Activated CD4-positive, alpha-beta T cell treated with anti-CD3 and anti-CD28 coated beads, Interleukin-2, amount 10 ng/mL, durations not matched to agents 24 days and 14 days (primary cell): ENCODE measurements at regions of chr1 and their contacts with region 1.

Region 1: GRCh38 chr1:35557292-35558063 is at the starts of genes KIAA0319L and NCDN:
- DNase-seq: peak; percentile 98
- H3K4me3 Mint-ChIP-seq: peak within 1 kb of the TSS; percentile 98
- H3K27ac Mint-ChIP-seq: peak within 1 kb of the TSS; percentile 98
- H3K4me1 Mint-ChIP-seq: peaks cover 47% of the 10 kb centered on the region
- H3K27me3 Mint-ChIP-seq: no peaks in the 10 kb centered on the region
- total RNA-seq, gene KIAA0319L: 35.2 and 35.3 TPM in 2 replicates
- total RNA-seq, gene NCDN: 33.5 and 34.0 TPM in 2 replicates

Region 2: GRCh38 chr1:34859446-34860200 is 697.9 kb before region 1 on chr1 and contains the start of gene SMIM12:
- intact Hi-C with region 1: loop called (anchors 10 kb)
- DNase-seq: peak; percentile 97
- H3K4me3 Mint-ChIP-seq: peak within 1 kb of the TSS; percentile 95
- H3K27ac Mint-ChIP-seq: peak within 1 kb of the TSS; percentile 99
- H3K4me1 Mint-ChIP-seq: peaks cover 43% of the 10 kb centered on the region
- H3K27me3 Mint-ChIP-seq: no peaks in the 10 kb centered on the region
- total RNA-seq, gene SMIM12: 63.2 TPM in 2 replicates

Region 3: GRCh38 chr1:34924759-34925555 is 632.5 kb before region 1 on chr1:
- intact Hi-C with region 1: no loop called
- DNase-seq: peak; percentile 86
- H3K4me3 Mint-ChIP-seq: no peak overlapping the region
- H3K27ac Mint-ChIP-seq: no peak overlapping the region
- H3K4me1 Mint-ChIP-seq: peaks cover 5% of the 10 kb centered on the region
- H3K27me3 Mint-ChIP-seq: peaks cover 56% of the 10 kb centered on the region

Region 4: DNA sequence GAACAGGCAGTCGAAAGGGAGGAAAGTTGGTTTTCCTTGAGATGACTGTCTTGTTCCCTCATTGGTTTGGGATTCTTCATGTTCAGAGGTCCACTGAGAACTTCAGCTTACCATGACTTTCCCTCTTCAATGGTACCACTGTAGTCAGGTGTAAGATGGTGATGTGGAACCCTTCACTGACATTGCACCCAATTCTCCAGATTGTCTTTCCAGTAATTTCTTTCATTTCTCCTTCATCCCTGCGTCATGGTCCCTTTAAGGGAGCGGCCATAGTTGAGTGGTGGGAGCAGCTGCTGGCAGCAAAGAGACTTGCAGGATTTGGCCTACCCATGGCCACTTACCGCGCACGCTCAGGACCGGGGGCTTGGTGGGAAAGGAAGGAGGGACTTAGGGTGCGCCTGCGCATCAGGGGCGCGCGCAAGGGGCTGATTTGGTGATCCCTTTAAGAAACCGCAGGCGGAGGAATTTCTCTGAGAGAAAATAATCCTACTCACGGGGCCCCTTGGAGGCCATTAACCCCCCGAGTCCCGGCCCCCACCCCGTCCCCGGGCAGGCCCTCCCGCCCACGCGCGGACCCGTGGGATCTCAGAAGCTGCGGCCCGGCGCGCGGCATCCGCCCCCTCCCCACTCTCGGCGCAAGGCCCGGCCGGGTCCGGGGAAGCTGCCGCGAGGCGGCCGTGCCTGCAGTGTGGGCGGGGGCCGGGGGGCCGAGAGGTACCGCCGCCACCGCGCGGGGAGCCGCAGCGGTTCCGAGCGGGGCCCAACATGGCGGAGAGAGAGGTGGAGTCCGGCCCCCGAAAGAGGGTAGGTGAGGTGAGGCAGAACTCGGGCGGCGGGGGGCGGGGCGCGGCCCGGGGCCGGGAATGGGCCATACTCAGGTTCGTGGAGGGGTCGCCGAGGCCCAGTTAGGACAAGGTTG is 288.9 kb before region 1 on chr1 and contains the start of gene ZMYM4:
- intact Hi-C with region 1: loop called (anchors 5 kb)
- DNase-seq: peak; percentile 97
- H3K4me3 Mint-ChIP-seq: peak within 1 kb of the TSS; percentile 95
- H3K27ac Mint-ChIP-seq: peak within 1 kb of the TSS; percentile 97
- H3K4me1 Mint-ChIP-seq: peaks cover 27% of the 10 kb centered on the region
- H3K27me3 Mint-ChIP-seq: peaks cover 6% of the 10 kb centered on the region
- total RNA-seq, gene ZMYM4: 25.6 and 31.0 TPM in 2 replicates

Region 5: GRCh38 chr1:35505908-35506798 is 51.3 kb before region 1 on chr1:
- intact Hi-C with region 1: loop called (anchors 1 kb)
- DNase-seq: peak; percentile 91
- H3K4me3 Mint-ChIP-seq: peak overlapping the region; percentile 79
- H3K27ac Mint-ChIP-seq: peak overlapping the region; percentile 91
- H3K4me1 Mint-ChIP-seq: peaks cover 61% of the 10 kb centered on the region
- H3K27me3 Mint-ChIP-seq: no peaks in the 10 kb centered on the region

Region 6: GRCh38 chr1:35539073-35539823 is 18.2 kb before region 1 on chr1:
- intact Hi-C with region 1: loop called (anchors 2 kb)
- DNase-seq: peak; percentile 87
- H3K4me3 Mint-ChIP-seq: peak overlapping the region; percentile 75
- H3K27ac Mint-ChIP-seq: peak overlapping the region; percentile 86
- H3K4me1 Mint-ChIP-seq: peaks cover 58% of the 10 kb centered on the region
- H3K27me3 Mint-ChIP-seq: no peaks in the 10 kb centered on the region

Region 7: GRCh38 chr1:35683012-35683411 is 125.5 kb after region 1 on chr1:
- intact Hi-C with region 1: no loop called
- DNase-seq: no peak
- H3K4me3 Mint-ChIP-seq: no peak overlapping the region
- H3K27ac Mint-ChIP-seq: no peak overlapping the region
- H3K4me1 Mint-ChIP-seq: no peaks in the 10 kb centered on the region
- H3K27me3 Mint-ChIP-seq: peaks cover 28% of the 10 kb centered on the region

Region 8: GRCh38 chr1:35726450-35727433 is 169.3 kb after region 1 on chr1:
- intact Hi-C with region 1: no loop called
- DNase-seq: peak; percentile 82
- H3K4me3 Mint-ChIP-seq: no peak overlapping the region
- H3K27ac Mint-ChIP-seq: no peak overlapping the region
- H3K4me1 Mint-ChIP-seq: peaks cover 2% of the 10 kb centered on the region
- H3K27me3 Mint-ChIP-seq: no peaks in the 10 kb centered on the region